Prostate gland (tissue), 2 donors: ENCODE measurements at regions of chr7 and their contacts with region 1.

Region 1: GRCh38 chr7:139680676-139681462 is 96.9 kb downstream of the HIPK2 start:
- DNase-seq: no peak
- H3K4me3 ChIP-seq: no peak overlapping the region
- H3K27ac ChIP-seq: peak overlapping the region; percentile 79 to 86
- H3K4me1 ChIP-seq: peaks cover 24% of the 10 kb centered on the region
- H3K27me3 ChIP-seq: no peaks in the 10 kb centered on the region
- CTCF ChIP-seq: no peak
- POLR2A ChIP-seq: no peak

Region 2: GRCh38 chr7:139648941-139649425 is 31.9 kb before region 1 on chr7:
- intact Hi-C with region 1: no loop called
- DNase-seq: no peak
- H3K4me3 ChIP-seq: no peak overlapping the region
- H3K27ac ChIP-seq: peak overlapping the region; percentile 27 to 58
- H3K4me1 ChIP-seq: peaks cover 4% of the 10 kb centered on the region
- H3K27me3 ChIP-seq: no peaks in the 10 kb centered on the region
- CTCF ChIP-seq: no peak
- POLR2A ChIP-seq: no peak

Region 3: DNA sequence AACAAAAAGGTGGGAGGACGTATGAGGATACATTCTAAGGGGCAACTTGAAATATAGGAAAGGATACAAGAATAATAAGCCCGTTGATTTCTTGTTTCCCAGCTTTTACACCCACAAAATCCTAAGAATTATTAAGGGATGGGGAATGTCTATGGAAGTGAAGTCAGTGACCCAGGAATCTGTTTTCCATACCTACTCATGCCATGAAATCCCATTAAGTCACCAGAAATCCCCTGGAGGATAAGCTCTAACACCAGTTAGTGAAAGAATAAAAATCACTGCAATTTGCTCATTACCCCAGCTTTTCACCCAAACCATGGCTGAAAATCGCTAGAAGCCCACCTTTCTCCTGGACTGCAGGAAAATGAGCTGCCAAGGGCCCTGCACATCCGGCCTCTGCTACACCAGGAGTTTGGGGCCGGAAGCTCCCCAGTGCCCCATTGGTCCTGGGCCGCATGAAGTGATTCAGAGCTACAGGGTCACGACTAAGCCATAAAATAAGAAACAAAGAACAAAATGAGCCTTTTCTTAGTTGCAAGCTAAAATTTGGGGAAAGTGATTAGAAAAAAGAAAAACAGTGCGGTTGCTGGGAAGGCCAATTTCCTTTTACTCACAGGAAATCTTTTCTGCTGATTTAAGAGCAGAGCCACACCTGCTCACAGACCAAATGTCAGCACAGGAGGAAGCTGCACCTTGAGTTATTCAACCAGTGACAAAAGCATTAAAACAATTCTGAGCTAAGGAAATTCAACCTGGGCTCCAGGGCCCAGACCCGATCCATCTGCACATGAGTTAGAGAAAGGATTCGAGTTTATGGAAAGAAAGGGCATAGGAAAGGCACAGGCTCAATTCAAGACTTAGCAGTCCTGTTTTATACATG is 56.6 kb after region 1 on chr7:
- intact Hi-C with region 1: loop called (anchors 5 kb)
- DNase-seq: no peak
- H3K4me3 ChIP-seq: no peak overlapping the region
- H3K27ac ChIP-seq: no peak overlapping the region
- H3K4me1 ChIP-seq: no peaks in the 10 kb centered on the region
- H3K27me3 ChIP-seq: no peaks in the 10 kb centered on the region
- CTCF ChIP-seq: no peak
- POLR2A ChIP-seq: no peak